ENCODE measurements at regions of chr12 and their contacts with region 1.

Region 1: GRCh38 chr12:76878899-76879709 is at the start of gene CSRP2:
- DNase-seq: peak; percentile 16 to 74 (median 43)
- ATAC-seq: peak; percentile 77
- H3K4me3 ChIP-seq: peak within 1 kb of the TSS; percentile 43
- H3K4me3 Mint-ChIP-seq: peak within 1 kb of the TSS; percentile 92 to 96 (median 94)
- H3K27ac ChIP-seq: peak within 1 kb of the TSS; percentile 6
- H3K27ac Mint-ChIP-seq: peak within 1 kb of the TSS in 3 of 9 donors; percentile 64 to 76 (median 72)
- H3K4me1 ChIP-seq: peaks cover 6% of the 10 kb centered on the region in 2 donors
- H3K4me1 Mint-ChIP-seq: peaks cover 5 to 23% (median 14%) of the 10 kb centered on the region in 7 donors
- H3K27me3 ChIP-seq: peaks cover 0 to 10% of the 10 kb centered on the region in 2 donors
- H3K27me3 Mint-ChIP-seq: peaks cover 44 to 66% (median 53%) of the 10 kb centered on the region in 5 donors
- total RNA-seq, gene CSRP2: not detected

Region 2: DNA sequence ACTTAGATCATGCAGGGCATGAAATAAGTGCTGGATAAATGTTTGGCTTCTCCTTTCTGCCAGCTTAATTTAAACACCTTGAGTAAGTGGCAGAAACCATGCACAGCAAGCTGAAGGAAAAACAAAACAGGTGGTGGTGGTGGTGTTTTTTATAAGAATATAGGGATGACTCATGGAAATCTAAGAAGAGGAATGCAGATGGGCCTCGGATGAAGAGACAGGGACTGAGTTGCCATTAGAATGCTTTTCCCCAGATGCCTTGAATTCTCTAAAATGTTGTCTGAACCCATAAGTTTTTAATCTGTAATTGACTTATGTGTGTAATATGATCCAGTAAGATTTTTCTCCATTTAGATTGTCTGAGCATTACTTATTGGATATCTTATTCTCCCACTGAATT is 208.3 kb before region 1 on chr12:
- CTCF ChIA-PET with region 1: no interaction called
- POLR2A ChIA-PET with region 1: no interaction called
- intact Hi-C with region 1: no loop called
- DNase-seq: no peak
- ATAC-seq: no peak
- H3K4me3 ChIP-seq: no peak overlapping the region
- H3K4me3 Mint-ChIP-seq: no peak overlapping the region
- H3K27ac ChIP-seq: no peak overlapping the region
- H3K27ac Mint-ChIP-seq: no peak overlapping the region
- H3K4me1 ChIP-seq: peaks cover 0 to 5% of the 10 kb centered on the region in 2 donors
- H3K4me1 Mint-ChIP-seq: peaks cover 3 to 12% (median 4%) of the 10 kb centered on the region in 7 donors
- H3K27me3 ChIP-seq: no peaks in the 10 kb centered on the region
- H3K27me3 Mint-ChIP-seq: peaks cover 0 to 11% (median 0%) of the 10 kb centered on the region in 5 donors

Region 3: GRCh38 chr12:76763743-76764675 is 115.1 kb before region 1 on chr12 and contains the start of gene ZDHHC17:
- CTCF ChIA-PET with region 1: no interaction called
- POLR2A ChIA-PET with region 1: no interaction called
- intact Hi-C with region 1: loop called in 1 of 2 experiments (anchors 2 kb)
- DNase-seq: peak; percentile 90 to 95 (median 93)
- ATAC-seq: peak; percentile 90
- H3K4me3 ChIP-seq: peak within 1 kb of the TSS; percentile 84
- H3K4me3 Mint-ChIP-seq: peak within 1 kb of the TSS; percentile 92 to 98 (median 97)
- H3K27ac ChIP-seq: peak within 1 kb of the TSS; percentile 94
- H3K27ac Mint-ChIP-seq: peak within 1 kb of the TSS; percentile 95 to 99 (median 97)
- H3K4me1 ChIP-seq: peaks cover 8 to 13% of the 10 kb centered on the region in 2 donors
- H3K4me1 Mint-ChIP-seq: peaks cover 17 to 57% (median 46%) of the 10 kb centered on the region in 7 donors
- H3K27me3 ChIP-seq: no peaks in the 10 kb centered on the region
- H3K27me3 Mint-ChIP-seq: peaks cover 0 to 13% (median 0%) of the 10 kb centered on the region in 5 donors
- total RNA-seq, gene ZDHHC17: 27.3 to 60.9 (median 56.3) TPM

Region 4: GRCh38 chr12:77010691-77011548 is 131.8 kb after region 1 on chr12:
- CTCF ChIA-PET with region 1: no interaction called
- POLR2A ChIA-PET with region 1: no interaction called
- intact Hi-C with region 1: loop called in 1 of 2 experiments (anchors 5 kb)
- DNase-seq: peak; percentile 19 to 65 (median 45)
- ATAC-seq: peak; percentile 84
- H3K4me3 ChIP-seq: no peak overlapping the region
- H3K4me3 Mint-ChIP-seq: peak overlapping the region in 2 of 10 donors; percentile 8 to 17
- H3K27ac ChIP-seq: no peak overlapping the region
- H3K27ac Mint-ChIP-seq: no peak overlapping the region
- H3K4me1 ChIP-seq: no peaks in the 10 kb centered on the region
- H3K4me1 Mint-ChIP-seq: peaks cover 0 to 6% (median 5%) of the 10 kb centered on the region in 7 donors
- H3K27me3 ChIP-seq: no peaks in the 10 kb centered on the region
- H3K27me3 Mint-ChIP-seq: peaks cover 9 to 20% (median 18%) of the 10 kb centered on the region in 5 donors

Region 5: DNA sequence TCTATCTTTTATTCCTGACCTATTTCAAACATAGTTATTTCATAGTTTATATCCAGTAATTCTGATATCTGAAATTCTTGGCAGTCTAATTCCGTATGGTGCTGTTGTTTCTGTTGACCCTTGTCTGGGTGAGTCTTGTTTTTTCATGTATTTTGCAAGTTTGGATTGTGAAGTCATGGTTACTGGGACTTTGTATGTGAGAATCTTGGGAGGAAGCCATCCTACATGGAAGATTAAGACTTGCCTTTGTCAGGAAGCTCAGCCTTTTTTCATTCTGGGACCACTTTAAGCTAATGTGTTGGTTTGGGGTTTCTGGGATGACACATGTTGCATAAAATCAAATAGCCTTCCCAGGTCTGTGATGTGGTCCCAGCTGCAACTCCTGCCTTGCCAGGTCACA is 377.9 kb after region 1 on chr12:
- CTCF ChIA-PET with region 1: no interaction called
- POLR2A ChIA-PET with region 1: no interaction called
- intact Hi-C with region 1: no loop called
- DNase-seq: no peak
- ATAC-seq: no peak
- H3K4me3 ChIP-seq: no peak overlapping the region
- H3K4me3 Mint-ChIP-seq: no peak overlapping the region
- H3K27ac ChIP-seq: no peak overlapping the region
- H3K27ac Mint-ChIP-seq: no peak overlapping the region
- H3K4me1 ChIP-seq: no peaks in the 10 kb centered on the region
- H3K4me1 Mint-ChIP-seq: no peaks in the 10 kb centered on the region
- H3K27me3 ChIP-seq: no peaks in the 10 kb centered on the region
- H3K27me3 Mint-ChIP-seq: no peaks in the 10 kb centered on the region